ENCODE measurements at regions of chr1 and their contacts with region 1.

Region 1: GRCh38 chr1:107829061-107830040 is 135.6 kb downstream of the VAV3 start:
- DNase-seq: peak; percentile 75 to 95 (median 91)
- H3K4me3 ChIP-seq: peak overlapping the region in 4 of 7 experiments; percentile 41 to 53 (median 44)
- H3K27ac ChIP-seq: peak overlapping the region; percentile 25 to 74
- H3K4me1 ChIP-seq: peaks cover 58 to 94% (median 83%) of the 10 kb centered on the region in 4 experiments
- H3K27me3 ChIP-seq: no peaks in the 10 kb centered on the region

Region 2: DNA sequence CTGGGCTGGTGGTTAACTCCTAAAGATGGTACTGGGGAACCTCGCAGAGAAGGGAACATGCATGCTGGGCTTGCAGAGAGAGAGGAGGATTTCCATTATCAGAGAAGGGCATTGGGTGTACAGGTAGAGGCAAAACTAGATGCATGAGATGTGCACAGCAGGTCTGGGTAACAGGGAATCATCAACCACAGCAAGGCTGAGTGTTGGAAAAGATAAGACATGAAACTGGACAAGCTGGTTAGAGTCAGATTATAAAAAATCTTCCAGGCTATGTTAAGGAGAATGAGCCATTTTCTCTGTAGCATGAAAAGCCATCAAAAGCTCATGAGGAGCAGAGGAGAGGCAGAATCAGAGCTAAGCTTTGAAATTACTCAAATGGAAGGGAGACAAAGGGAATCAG is 12.1 kb before region 1 on chr1:
- CTCF ChIA-PET with region 1: interaction called, 11 read pairs
- POLR2A ChIA-PET with region 1: no interaction called
- DNase-seq: peak in 1 of 3 donors; percentile 48
- H3K4me3 ChIP-seq: no peak overlapping the region
- H3K27ac ChIP-seq: no peak overlapping the region
- H3K4me1 ChIP-seq: peaks cover 4 to 25% (median 8%) of the 10 kb centered on the region in 4 experiments
- H3K27me3 ChIP-seq: no peaks in the 10 kb centered on the region

Region 3: DNA sequence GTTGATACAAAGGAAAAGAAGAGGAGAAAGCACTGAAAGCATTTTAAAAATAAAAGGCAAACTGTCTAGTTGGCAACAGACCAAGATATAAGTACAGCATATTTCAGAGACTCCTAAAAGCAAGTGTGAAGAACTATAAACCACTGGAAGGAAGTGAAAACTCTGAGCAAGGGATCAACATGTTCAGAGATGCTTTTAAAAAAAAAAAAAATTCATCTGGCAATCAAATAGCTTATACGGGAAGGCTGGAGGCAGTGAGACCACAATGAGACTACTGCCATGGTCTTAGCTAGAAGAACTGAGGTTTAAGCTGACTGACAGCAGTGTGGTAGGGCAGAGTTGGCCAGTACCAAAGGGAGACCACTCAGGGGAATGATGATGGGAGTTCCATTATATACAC is 11.4 kb after region 1 on chr1:
- CTCF ChIA-PET with region 1: interaction called, 80 read pairs
- POLR2A ChIA-PET with region 1: interaction called, 4 read pairs
- DNase-seq: peak in 2 of 3 donors; percentile 71 to 81
- H3K4me3 ChIP-seq: peak overlapping the region in 3 of 7 experiments; percentile 6 to 43 (median 16)
- H3K27ac ChIP-seq: peak overlapping the region in 1 of 2 experiments; percentile 70
- H3K4me1 ChIP-seq: peaks cover 20 to 91% (median 57%) of the 10 kb centered on the region in 4 experiments
- H3K27me3 ChIP-seq: no peaks in the 10 kb centered on the region